Cardiac septum (tissue), 1 donor: ENCODE measurements at regions of chr15 and their contacts with region 1.

Region 1: DNA sequence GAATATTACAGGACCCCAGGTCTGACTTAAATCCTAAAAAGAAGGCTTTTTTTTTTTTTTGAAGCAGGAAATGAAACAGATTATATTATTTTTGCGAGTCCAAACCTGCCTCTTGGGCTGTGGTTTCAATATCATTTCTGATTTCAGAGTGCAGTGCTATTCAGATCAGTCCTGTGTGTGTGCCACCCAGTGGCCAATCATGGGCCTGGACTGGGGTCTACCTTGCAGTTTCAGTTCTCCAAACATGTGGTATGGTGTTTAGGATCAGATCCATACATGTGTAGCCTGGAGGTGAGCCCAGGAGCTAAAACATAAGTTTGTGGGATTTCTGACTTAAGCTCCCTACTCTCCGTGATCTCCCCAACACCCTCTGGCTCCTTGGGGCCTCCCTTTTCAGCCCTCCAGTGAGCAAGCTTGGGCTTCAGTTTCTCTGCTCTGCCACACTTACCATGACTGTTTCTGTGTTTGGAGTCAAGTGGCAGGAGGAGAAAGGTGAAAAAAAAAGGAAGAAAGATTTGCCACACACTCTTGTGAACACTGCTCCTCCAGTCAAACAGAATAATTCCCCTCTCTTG is 12.1 kb upstream of the THSD4 start:
- DNase-seq: no peak

Region 2: DNA sequence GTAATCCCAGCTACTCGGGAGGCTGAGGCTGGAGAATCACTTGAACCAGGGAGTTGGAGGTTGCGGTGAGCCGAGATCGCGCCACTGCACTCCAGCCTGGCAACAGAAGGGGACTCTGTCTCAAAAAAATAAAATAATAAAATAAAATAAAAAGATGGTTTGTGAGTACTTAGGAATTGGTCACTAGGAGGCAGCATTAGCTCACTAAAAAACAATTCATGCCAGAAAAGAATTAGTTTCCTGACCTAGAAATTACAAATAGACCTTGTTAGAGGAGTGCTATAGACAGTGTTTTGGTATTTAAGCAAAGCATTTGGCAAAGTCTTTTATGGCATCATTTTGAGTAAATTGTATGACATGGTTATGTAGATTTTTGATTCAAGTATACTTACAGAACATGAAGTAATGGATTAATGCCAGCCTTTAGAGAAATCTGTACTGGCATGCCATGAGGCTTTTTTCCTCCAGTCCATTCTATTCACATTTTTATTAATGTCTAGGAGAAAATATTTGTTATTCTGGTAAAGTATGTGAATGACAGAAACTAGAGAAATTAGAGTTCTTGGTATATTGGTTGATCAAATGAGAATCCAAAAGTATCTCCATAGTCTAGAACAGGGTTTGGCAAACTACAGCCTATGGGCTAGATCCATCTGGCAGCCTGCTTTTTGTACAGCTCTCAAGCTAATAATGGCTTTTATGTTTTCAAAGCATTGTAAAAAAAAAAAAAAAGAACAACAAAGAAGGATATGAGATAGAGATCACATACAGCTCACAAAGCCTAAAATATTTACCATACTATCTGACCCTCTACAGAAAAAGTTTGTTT is 129.0 kb before region 1 on chr15:
- intact Hi-C with region 1: loop called (anchors 10 kb)
- DNase-seq: no peak

Region 3: GRCh38 chr15:71168478-71168834 is 65.3 kb after region 1 on chr15:
- intact Hi-C with region 1: no loop called
- DNase-seq: no peak

Region 4: DNA sequence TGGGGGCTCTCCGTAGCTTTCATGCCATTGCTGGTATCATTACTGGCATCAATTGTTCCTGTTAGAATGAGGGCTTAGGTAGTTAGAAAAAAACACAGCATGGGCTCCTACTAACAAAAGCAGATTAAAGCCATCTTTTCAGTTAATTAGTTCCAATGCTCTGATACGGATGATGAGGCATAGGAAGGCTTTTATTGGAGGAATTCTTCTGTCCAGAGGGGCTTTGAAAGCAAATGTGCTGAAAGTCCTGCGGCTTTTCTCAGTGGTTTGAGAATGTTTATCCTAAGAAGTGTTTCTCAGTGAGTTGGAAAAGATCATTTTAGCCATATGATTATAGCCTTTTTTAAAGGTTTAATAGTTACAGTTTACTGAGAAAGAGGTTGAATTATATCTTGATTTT is 210.6 kb after region 1 on chr15:
- intact Hi-C with region 1: no loop called
- DNase-seq: no peak